HEK293 (cell line): ENCODE measurements at regions of chr1 and their contacts with region 1.

Region 1: GRCh38 chr1:117284399-117285215 is 73.9 kb upstream of the VTCN1 start:
- H3K4me3 ChIP-seq: no peak overlapping the region
- H3K27ac ChIP-seq: no peak overlapping the region
- H3K4me1 ChIP-seq: no peaks in the 10 kb centered on the region
- CTCF ChIP-seq: peak; percentile 64

Region 2: DNA sequence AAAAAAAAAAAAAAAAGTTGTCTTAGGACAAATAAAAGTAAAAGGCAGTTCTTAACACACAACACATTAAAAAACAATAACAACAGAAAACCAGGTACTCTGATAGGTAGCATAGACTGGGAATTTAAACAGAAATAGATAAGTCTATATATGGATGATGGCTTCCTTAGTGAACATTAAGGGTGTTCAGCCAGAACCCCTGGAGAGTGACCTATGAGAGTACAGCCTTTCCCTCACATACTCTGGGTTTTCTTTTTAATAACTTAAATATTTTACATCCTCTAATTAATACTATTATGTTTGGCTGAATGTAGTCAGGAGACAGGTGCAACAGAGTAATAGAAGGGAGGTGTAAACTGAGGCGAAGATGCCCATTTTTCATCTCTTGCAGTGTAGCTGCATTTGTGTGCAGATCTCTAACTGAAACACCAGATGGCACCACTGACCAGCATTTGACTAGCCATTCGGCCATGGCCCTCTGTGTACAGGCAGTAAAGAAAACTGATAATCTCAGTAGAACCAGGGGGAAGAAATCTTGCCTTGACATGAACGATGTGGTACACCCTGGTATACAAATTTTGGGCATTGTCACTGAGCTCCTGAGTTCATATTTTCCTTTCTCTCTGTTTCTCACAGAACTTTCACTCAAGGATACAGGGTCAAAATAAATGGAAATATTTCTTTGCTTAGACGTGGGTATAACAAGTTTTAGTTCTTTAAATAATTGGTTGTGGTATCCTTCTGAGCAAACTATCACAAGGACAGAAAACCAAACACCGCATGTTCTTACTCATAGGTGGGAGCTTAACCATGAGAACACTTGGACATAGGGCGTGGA is 216.9 kb before region 1 on chr1:
- CTCF ChIA-PET with region 1: interaction called, 101 read pairs
- POLR2A ChIA-PET with region 1: no interaction called
- H3K4me3 ChIP-seq: no peak overlapping the region
- H3K27ac ChIP-seq: no peak overlapping the region
- H3K4me1 ChIP-seq: no peaks in the 10 kb centered on the region
- CTCF ChIP-seq: peak; percentile 72

Region 3: DNA sequence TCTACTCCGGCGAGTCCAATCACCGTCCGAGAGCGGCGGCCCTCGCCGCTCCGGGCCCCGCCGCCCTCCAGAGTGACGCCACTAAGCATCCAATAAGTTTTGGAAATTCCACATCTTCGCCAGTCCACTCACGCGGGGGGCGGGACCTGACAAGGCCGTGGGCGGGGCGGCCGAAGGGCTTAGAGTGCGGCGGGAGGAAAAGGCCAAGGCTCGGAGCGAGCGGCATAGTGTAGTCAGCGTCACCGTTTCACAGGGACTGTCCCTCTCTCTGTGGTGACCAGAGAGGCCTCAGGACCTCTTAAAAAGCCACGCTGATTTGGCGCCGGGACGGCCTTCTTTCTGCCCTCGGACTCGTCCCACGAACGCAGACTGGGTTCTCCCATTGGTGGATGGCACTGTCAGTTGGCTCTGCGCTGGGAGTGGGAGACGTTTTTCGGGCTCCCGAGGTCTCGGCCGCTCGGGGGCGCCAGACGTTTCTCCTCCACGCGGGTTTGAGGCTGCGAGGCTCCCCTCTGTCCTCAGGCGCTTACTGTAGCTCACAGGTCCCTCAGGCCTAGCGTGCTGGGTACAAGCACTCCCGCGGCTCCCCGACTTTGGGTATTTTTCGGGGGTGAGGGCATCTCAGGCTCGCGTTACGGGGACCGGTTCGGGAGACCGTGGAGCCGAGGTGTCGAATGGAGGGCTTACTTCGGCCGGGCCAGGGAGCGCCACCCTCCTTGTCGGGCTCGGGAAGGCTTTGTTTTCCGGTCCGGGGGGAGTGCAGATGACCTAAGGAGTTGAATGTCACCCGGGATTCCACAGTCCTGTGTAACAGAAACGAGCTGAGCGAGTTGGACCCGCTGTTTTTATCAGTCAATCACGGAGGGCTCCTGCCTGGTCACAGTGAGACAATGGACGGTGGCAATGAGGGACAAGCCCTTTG is 162.6 kb before region 1 on chr1:
- CTCF ChIA-PET with region 1: interaction called, 18 read pairs
- POLR2A ChIA-PET with region 1: no interaction called
- H3K4me3 ChIP-seq: peak overlapping the region; percentile 80
- H3K27ac ChIP-seq: peak overlapping the region; percentile 77
- H3K4me1 ChIP-seq: no peaks in the 10 kb centered on the region
- CTCF ChIP-seq: peak; percentile 90

Region 4: GRCh38 chr1:117262971-117263370 is 21.6 kb before region 1 on chr1:
- CTCF ChIA-PET with region 1: interaction called, 15 read pairs
- POLR2A ChIA-PET with region 1: no interaction called
- H3K4me3 ChIP-seq: no peak overlapping the region
- H3K27ac ChIP-seq: no peak overlapping the region
- H3K4me1 ChIP-seq: no peaks in the 10 kb centered on the region
- CTCF ChIP-seq: no peak

Region 5: DNA sequence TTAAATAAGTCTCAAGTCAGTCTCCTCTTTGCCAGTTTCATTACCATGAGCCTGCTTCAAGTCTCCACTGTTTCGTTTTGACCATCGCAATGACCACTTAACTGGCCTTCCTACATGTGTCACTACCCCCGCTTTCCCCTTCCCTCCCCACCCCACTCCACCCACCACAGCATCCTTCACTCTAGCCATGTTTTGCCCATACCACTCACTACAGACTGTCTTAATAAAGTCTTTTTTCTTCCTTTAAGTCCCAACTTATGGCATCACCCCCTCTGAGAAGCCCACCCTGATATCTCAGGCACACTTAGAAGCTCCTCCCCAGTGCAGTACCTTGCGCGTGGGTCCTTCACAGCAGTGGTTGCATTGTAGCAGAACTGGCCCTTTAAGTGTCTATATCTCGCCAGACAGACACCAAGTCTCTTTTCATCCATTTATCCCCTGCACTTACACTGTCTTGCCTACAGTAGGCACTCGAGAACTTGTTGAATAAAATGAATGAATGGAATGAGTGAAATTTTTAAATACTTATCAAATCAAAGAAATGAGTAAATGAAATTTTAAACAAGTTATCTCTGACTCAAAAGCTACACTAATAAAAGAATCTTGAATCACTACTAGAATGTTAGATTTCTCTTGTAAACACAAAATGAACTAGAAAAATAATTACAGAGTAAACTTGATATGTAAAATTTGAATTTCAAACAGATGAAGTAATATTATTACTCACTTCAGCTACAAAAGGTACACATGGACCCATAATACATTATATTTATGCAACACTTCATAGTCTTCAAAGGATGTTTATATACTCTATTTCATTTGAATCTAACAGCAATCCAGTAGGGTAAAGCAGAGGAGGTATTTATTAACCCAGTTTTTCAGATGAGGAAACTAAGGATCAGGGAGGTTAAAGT is 27.9 kb after region 1 on chr1:
- CTCF ChIA-PET with region 1: no interaction called
- POLR2A ChIA-PET with region 1: no interaction called
- H3K4me3 ChIP-seq: no peak overlapping the region
- H3K27ac ChIP-seq: no peak overlapping the region
- H3K4me1 ChIP-seq: no peaks in the 10 kb centered on the region
- CTCF ChIP-seq: no peak

Region 6: GRCh38 chr1:117372863-117373412 is 88.3 kb after region 1 on chr1:
- CTCF ChIA-PET with region 1: no interaction called
- POLR2A ChIA-PET with region 1: no interaction called
- H3K4me3 ChIP-seq: no peak overlapping the region
- H3K27ac ChIP-seq: no peak overlapping the region
- H3K4me1 ChIP-seq: 0 out of 2 replicates have a peak, but pooled peaks cover 3% of the 10 kb centered on the region
- CTCF ChIP-seq: no peak